Activated CD4-positive, alpha-beta memory T cell treated with anti-CD3 and anti-CD28 coated beads, Interleukin-2, amount 10 ng/mL, durations not matched to agents 7 days and 5 days (primary cell): ENCODE measurements at regions of chr14 and their contacts with region 1.

Region 1: DNA sequence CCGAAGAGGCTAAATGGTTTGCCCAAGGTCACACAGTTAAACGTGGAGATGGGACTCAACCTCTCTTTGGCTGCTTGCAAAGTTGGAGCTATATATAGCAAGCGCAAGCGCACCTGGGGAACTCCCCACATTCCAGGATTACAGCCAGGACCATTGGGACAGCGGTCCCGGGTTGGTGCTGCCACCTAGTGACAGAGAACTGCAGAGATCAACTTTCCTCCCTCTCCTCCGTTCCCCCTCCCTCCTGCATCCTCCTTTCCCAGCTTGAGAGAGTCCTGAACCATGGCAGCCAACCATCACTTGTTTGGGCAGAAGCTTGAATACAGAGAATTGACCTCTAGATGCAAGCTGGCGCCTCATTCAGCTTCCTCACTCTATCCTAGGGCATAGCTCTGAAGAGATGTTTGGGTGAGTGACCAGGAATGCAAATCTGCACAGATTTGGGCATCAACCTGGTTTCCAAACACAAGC is 17.4 kb upstream of the FLVCR2 start:
- DNase-seq: peak; percentile 52
- H3K4me3 Mint-ChIP-seq: no peak overlapping the region
- H3K27ac Mint-ChIP-seq: peak overlapping the region; percentile 75
- H3K4me1 Mint-ChIP-seq: peaks cover 68% of the 10 kb centered on the region
- H3K27me3 Mint-ChIP-seq: no peaks in the 10 kb centered on the region

Region 2: GRCh38 chr14:75497191-75497590 is 63.8 kb before region 1 on chr14:
- CTCF ChIA-PET with region 1: interaction called, 10 read pairs
- POLR2A ChIA-PET with region 1: interaction called, 3 read pairs
- DNase-seq: peak; percentile 44
- H3K4me3 Mint-ChIP-seq: peak overlapping the region; percentile 31
- H3K27ac Mint-ChIP-seq: peak overlapping the region; percentile 76
- H3K4me1 Mint-ChIP-seq: peaks cover 55% of the 10 kb centered on the region
- H3K27me3 Mint-ChIP-seq: no peaks in the 10 kb centered on the region

Region 3: DNA sequence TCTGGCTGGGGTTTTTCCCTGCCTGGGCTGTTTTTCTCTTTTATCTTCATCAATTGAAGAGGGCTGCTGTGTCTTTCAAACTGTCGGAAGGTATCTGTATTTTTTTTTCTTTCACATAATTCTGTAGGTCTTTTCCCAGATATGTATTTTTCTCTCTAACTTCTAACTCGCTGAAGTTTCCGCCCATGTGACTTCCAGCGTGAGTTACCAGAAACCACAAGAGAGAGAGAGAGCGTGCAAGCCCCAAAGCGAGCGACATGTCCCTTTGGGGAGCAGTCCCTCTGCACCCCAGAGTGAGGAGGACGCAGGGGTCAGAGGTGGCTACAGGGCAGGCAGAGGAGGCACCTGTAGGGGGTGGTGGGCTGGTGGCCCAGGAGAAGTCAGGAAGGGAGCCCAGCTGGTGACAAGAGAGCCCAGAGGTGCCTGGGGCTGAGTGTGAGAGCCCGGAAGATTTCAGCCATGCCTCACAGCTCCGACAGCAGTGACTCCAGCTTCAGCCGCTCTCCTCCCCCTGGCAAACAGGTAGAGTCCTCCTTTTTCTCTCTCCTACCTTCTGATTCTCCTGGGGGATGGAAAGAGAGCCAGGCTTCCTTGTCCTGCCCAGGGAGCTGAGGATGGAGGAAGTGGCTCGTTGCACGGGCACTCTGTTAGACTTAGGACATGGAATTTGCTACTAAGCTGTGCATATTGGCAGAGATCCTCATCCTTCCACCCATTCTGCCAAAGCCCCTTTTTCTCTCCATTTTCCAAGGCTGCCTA is 38.6 kb before region 1 on chr14 and contains the start of gene BATF:
- CTCF ChIA-PET with region 1: interaction called, 42 read pairs
- POLR2A ChIA-PET with region 1: interaction called, 27 read pairs
- DNase-seq: peak; percentile 85
- H3K4me3 Mint-ChIP-seq: peak within 1 kb of the TSS; percentile 99
- H3K27ac Mint-ChIP-seq: peak within 1 kb of the TSS; percentile 94
- H3K4me1 Mint-ChIP-seq: peaks cover 65% of the 10 kb centered on the region
- H3K27me3 Mint-ChIP-seq: no peaks in the 10 kb centered on the region
- total RNA-seq, gene BATF: 63.0 to 66.1 TPM

Region 4: GRCh38 chr14:75549169-75549568 is 11.8 kb before region 1 on chr14:
- CTCF ChIA-PET with region 1: interaction called, 14 read pairs
- POLR2A ChIA-PET with region 1: interaction called, 9 read pairs
- DNase-seq: no peak
- H3K4me3 Mint-ChIP-seq: no peak overlapping the region
- H3K27ac Mint-ChIP-seq: peak overlapping the region; percentile 49
- H3K4me1 Mint-ChIP-seq: peaks cover 68% of the 10 kb centered on the region
- H3K27me3 Mint-ChIP-seq: no peaks in the 10 kb centered on the region

Region 5: DNA sequence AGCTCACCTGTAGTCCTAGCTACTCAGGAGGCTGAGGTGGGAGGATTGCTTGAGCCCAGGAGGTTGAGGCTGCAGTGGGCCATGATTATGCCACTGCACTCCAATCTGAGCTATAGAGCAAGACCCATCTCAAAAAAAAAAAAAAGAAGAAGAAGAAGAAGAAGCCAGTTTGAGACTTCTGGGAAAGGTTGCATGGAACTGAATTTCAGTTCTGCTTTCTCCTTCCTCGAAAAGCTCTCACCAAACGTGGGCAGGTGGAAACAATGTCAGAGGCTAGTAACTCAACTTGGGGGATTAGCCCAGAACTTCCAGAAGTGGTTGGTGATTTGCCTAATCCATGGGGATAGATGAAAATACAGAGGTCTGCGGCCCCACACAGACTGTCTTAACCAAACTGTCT is 36.2 kb after region 1 on chr14:
- CTCF ChIA-PET with region 1: no interaction called
- POLR2A ChIA-PET with region 1: no interaction called
- DNase-seq: no peak
- H3K4me3 Mint-ChIP-seq: no peak overlapping the region
- H3K27ac Mint-ChIP-seq: no peak overlapping the region
- H3K4me1 Mint-ChIP-seq: no peaks in the 10 kb centered on the region
- H3K27me3 Mint-ChIP-seq: no peaks in the 10 kb centered on the region